Activated naive CD4-positive, alpha-beta T cell treated with anti-CD3 and anti-CD28 coated beads, Interleukin-2, amount 10 ng/mL, durations not matched to agents 7 days and 5 days (primary cell): ENCODE measurements at regions of chr10 and their contacts with region 1.

Region 1: DNA sequence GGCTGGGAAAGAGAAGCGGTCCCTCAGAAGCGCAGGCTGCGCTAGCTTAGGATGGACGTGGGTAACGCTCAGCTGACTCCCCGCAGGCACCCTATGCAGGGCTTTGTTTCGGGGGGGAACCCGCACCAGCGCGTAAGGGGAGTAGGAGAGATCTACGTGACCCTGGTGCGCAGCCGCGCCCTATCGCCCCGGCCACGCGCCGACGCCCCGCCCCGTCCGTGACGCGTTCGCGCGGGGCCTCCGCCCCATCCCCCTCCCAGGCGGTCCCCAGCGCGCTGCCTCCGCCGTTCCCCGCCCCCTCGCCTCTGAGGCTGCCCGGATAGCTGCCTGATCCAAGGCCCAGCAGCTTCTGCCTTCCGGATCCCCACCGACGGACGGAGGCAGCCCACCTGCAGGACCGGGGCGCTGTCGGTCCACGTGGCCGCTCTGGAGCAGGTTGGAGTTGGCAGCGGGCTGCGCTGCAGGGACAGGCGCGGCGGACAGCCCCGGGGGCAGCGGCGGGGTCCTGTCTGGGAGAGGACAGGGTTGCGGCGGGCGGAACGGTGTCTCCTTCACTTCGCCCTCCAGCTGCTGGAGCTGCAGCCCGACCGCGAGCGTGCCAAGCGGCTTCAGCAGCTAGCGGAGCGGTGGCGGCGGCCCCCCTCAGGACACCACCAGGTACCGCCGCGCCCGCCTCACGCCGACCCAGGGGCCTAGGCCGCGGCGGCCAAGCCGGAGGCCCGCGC is at the start of gene VDAC2:
- DNase-seq: peak; percentile 94
- H3K4me3 Mint-ChIP-seq: peak within 1 kb of the TSS; percentile 91
- H3K27ac Mint-ChIP-seq: peak within 1 kb of the TSS; percentile 100
- H3K4me1 Mint-ChIP-seq: peaks cover 38% of the 10 kb centered on the region
- H3K27me3 Mint-ChIP-seq: peaks cover 4% of the 10 kb centered on the region

Region 2: GRCh38 chr10:75187961-75188426 is 22.4 kb before region 1 on chr10:
- CTCF ChIA-PET with region 1: interaction called, 22 read pairs
- DNase-seq: peak; percentile 82
- H3K4me3 Mint-ChIP-seq: no peak overlapping the region
- H3K27ac Mint-ChIP-seq: peak overlapping the region; percentile 83
- H3K4me1 Mint-ChIP-seq: peaks cover 19% of the 10 kb centered on the region
- H3K27me3 Mint-ChIP-seq: no peaks in the 10 kb centered on the region